PC-9 (cell line): ENCODE measurements at regions of chr20 and their contacts with region 1.

Region 1: DNA sequence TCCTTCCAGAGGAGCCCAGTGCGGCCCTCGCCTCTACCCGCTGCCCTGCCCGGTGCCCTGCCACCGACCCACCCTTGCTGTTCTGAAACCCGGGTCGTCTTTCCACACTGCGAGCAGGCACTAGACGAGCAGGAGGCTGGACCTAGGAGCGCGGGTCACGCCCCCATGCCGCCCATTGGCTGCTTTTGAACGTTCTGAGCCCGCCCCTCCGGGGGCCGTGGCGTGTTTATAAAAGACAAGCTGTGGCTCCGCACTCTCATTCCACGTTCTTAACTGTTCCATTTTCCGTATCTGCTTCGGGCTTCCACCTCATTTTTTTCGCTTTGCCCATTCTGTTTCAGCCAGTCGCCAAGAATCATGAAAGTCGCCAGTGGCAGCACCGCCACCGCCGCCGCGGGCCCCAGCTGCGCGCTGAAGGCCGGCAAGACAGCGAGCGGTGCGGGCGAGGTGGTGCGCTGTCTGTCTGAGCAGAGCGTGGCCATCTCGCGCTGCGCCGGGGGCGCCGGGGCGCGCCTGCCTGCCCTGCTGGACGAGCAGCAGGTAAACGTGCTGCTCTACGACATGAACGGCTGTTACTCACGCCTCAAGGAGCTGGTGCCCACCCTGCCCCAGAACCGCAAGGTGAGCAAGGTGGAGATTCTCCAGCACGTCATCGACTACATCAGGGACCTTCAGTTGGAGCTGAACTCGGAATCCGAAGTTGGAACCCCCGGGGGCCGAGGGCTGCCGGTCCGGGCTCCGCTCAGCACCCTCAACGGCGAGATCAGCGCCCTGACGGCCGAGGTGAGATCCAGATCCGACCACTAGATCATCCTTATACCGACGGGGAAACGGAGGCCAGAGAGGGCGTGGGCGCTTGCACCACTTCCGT is at the start of gene ID1:
- DNase-seq: peak; percentile 86 to 98
- H3K4me3 ChIP-seq: peak within 1 kb of the TSS; percentile 97
- H3K27ac ChIP-seq: peak within 1 kb of the TSS; percentile 96
- H3K4me1 ChIP-seq: peaks cover 54% of the 10 kb centered on the region
- H3K27me3 ChIP-seq: no peaks in the 10 kb centered on the region
- CTCF ChIP-seq: no peak
- total RNA-seq, gene ID1: 74.4 and 164 TPM in 2 replicates

Region 2: GRCh38 chr20:31355981-31356380 is 249.3 kb before region 1 on chr20:
- CTCF ChIA-PET with region 1: no interaction called
- POLR2A ChIA-PET with region 1: interaction called, 19 read pairs
- intact Hi-C with region 1: no loop called
- DNase-seq: no peak
- H3K4me3 ChIP-seq: no peak overlapping the region
- H3K27ac ChIP-seq: no peak overlapping the region
- H3K4me1 ChIP-seq: no peaks in the 10 kb centered on the region
- H3K27me3 ChIP-seq: peaks cover 29% of the 10 kb centered on the region; the same call in 1 of the 2 replicates
- CTCF ChIP-seq: no peak

Region 3: DNA sequence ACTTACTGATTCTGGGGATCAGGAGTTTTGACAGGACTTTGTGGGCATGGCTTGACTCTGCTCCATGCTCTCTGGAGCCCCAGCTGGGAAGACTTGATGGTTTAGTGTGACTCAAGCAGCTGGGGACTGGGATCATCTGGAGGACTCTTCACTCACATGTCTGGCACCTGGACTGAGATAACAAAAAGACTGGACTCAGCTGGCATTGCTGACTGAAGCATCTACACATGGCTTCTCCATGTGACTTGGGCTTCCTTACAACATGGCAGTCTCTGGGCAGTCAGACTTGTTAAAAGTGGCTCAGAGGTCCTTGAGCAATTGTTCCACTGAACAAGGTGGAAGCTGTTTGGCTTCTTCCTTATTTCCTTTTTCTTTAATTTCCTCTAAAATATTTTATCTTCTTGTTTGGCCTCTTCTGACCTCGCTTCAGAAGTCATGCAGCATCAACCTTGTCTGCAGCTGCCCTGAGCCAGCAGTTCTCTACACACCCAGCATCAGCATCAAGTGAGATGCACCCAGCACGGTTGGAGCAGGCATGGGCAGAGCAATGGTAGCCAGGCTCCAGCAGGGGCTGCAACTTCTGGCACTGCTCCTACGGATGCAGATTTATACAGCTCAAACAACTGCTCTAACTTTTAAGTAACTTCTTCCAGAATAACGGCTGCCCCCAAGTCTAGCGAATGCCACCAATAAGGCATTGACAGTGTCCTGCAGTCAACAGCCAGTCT is 96.6 kb before region 1 on chr20:
- CTCF ChIA-PET with region 1: interaction called, 3 read pairs
- POLR2A ChIA-PET with region 1: interaction called, 12 read pairs
- intact Hi-C with region 1: no loop called
- DNase-seq: no peak
- H3K4me3 ChIP-seq: no peak overlapping the region
- H3K27ac ChIP-seq: no peak overlapping the region
- H3K4me1 ChIP-seq: peaks cover 12% of the 10 kb centered on the region
- H3K27me3 ChIP-seq: no peaks in the 10 kb centered on the region
- CTCF ChIP-seq: no peak

Region 4: GRCh38 chr20:31514159-31515071 is 90.9 kb before region 1 on chr20 and contains the start of gene HM13:
- CTCF ChIA-PET with region 1: no interaction called
- POLR2A ChIA-PET with region 1: no interaction called
- intact Hi-C with region 1: loop called (anchors 1 kb)
- DNase-seq: peak; percentile 76 to 90
- H3K4me3 ChIP-seq: peak within 1 kb of the TSS; percentile 95
- H3K27ac ChIP-seq: peak within 1 kb of the TSS; percentile 68
- H3K4me1 ChIP-seq: peaks cover 28% of the 10 kb centered on the region
- H3K27me3 ChIP-seq: no peaks in the 10 kb centered on the region
- CTCF ChIP-seq: peak; percentile 94
- total RNA-seq, gene HM13: 220 and 272 TPM in 2 replicates

Region 5: GRCh38 chr20:31566658-31567379 is 38.4 kb before region 1 on chr20:
- CTCF ChIA-PET with region 1: interaction called, 407 read pairs
- POLR2A ChIA-PET with region 1: interaction called, 81 read pairs
- intact Hi-C with region 1: loop called (anchors 1 kb)
- DNase-seq: peak; percentile 95 to 99
- H3K4me3 ChIP-seq: peak overlapping the region; percentile 47; the same call in 1 of the 2 replicates
- H3K27ac ChIP-seq: peak overlapping the region; percentile 99
- H3K4me1 ChIP-seq: peaks cover 83% of the 10 kb centered on the region
- H3K27me3 ChIP-seq: no peaks in the 10 kb centered on the region
- CTCF ChIP-seq: 0 out of 2 replicates have a peak, but pooled peaks have one; percentile 47

Region 6: DNA sequence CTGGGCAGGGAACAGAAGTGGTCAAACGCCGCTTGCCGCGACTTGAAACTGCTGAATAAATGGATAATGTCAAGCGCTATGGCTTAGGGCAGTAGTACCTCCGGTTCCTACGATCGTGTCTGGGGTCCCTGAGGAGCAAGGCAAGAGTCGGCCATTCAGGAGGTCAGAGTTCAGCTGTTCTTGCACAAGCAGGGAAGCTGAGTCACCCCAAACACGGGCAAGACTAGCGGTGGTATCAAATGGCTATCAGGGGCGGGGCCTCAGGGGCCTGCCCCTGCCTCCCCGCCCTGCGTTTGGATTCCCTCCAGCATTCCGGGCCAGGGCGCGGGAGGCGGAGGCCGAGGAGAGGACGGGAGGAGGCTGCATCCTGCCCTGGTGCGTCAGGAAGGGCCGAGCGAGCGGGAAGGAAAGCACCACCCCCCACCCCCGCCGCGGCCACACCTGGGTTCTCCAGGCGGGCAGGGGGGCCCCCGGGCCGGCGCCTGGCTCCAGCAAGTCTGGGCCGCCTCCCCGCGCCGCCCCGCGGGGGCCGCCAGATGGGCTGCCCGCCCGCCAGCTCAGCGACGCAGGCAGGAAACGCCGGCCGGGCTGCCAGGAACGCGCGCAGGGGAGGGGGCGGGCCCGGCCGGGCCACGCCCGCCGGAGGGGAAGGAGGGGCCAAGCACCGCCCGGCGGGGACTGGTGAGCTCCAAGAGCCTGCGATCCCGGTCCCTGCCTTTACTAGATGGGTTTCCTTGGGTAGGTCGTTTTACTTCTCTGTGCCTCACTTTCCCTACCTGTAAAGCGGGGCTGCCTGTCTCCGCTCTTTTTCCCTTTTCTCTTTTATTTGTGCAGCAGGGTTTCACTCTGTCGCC is 32.3 kb before region 1 on chr20:
- CTCF ChIA-PET with region 1: interaction called, 407 read pairs
- POLR2A ChIA-PET with region 1: interaction called, 81 read pairs
- intact Hi-C with region 1: loop called (anchors 1 kb)
- DNase-seq: peak; percentile 95 to 100
- H3K4me3 ChIP-seq: peak overlapping the region; percentile 64
- H3K27ac ChIP-seq: peak overlapping the region; percentile 96
- H3K4me1 ChIP-seq: peaks cover 46% of the 10 kb centered on the region
- H3K27me3 ChIP-seq: no peaks in the 10 kb centered on the region
- CTCF ChIP-seq: no peak